Psoas muscle (tissue), 8 donors: ENCODE measurements at regions of chr2 and their contacts with region 1.

Region 1: DNA sequence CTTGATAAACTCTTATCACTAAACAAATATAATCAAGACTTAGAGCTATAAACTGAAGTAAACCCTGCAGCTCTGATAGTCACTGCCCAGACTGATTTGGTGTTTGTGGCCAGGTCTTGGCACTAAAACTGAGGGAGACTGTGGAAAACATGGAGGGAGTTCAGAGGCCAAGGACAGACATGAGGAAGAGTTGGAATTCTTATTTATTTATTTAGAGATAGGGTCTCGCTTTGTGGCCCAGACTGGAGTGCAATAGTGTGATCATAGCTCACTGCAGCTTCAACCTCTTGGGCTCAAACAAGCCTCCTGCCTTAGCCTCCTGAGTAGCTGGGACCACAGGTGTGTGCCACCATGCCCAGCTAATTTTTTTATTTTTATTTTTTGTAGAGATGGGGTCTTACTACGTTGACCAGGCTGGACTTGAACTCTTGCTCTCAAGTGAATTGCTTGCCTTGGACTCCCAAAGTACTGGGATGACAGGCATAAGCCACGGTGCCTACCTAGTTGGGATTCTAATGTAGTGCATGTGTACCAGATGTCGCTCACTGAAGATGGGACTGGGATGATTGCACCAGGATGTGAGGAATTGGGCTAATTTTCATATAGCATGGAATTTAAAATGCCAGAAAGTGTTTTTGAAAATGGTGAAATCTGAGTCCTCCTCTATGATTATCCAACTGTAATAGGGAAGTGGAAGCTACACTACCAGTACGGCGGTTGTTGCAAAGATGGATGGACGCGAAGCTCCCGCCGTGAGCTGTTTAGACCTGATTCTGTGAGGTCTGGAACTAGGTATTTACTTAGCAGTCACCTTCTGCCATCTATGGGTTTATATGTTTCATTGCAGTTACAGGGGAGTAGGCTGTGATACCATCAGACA is 52.7 kb upstream of the CTLA4 start:
- DNase-seq: peak; percentile 41 to 65
- ATAC-seq: peak; percentile 76 to 84 (median 79)
- H3K4me3 ChIP-seq: no peak overlapping the region
- H3K27ac ChIP-seq: peak overlapping the region; percentile 38
- H3K4me1 ChIP-seq: peaks cover 33% of the 10 kb centered on the region
- H3K27me3 ChIP-seq: no peaks in the 10 kb centered on the region
- CTCF ChIP-seq: peak; percentile 75

Region 2: GRCh38 chr2:203484266-203485112 is 330.4 kb before region 1 on chr2:
- intact Hi-C with region 1: loop called (anchors 2 to 10 kb)
- DNase-seq: no peak
- ATAC-seq: peak; percentile 84 to 97 (median 88)
- H3K4me3 ChIP-seq: no peak overlapping the region
- H3K27ac ChIP-seq: no peak overlapping the region
- H3K4me1 ChIP-seq: no peaks in the 10 kb centered on the region
- H3K27me3 ChIP-seq: no peaks in the 10 kb centered on the region
- CTCF ChIP-seq: peak; percentile 72

Region 3: GRCh38 chr2:203650860-203651613 is 163.9 kb before region 1 on chr2:
- intact Hi-C with region 1: loop called (anchors 5 to 10 kb)
- DNase-seq: no peak
- ATAC-seq: peak; percentile 86 to 91 (median 88)
- H3K4me3 ChIP-seq: no peak overlapping the region
- H3K27ac ChIP-seq: peak overlapping the region; percentile 1
- H3K4me1 ChIP-seq: peaks cover 27% of the 10 kb centered on the region
- H3K27me3 ChIP-seq: peaks cover 0 to 2% (median 0%) of the 10 kb centered on the region in 3 donors
- CTCF ChIP-seq: peak; percentile 43

Region 4: DNA sequence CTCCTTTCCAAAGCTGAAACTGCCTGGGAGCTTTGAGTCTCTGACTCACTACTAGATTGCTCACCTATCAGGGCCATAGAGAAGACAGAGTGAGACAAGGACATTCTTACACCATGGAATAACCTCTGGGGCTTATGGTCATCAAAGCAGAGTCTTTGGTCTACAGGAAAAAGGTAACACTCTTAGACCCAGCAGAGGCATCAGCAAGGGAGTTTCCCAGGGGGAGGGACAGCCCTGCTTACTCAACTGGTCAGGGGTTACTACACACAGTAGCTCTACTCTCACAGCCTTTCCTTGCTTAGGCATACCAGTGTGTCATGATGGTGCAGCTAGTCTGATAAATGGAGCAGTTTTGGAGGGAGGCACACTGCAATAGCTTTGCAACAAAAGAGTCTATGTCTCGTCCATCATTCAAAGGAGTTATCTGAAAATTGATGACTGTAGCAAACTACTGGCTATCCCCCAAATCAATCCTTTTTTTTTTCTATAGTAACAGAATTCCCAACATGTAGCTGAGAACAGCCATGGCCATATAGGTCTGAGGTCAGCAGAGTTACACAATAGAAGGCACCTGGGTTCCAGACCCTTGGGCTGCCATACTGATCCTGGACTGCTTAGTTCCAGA is 130.9 kb before region 1 on chr2:
- intact Hi-C with region 1: loop called in 1 of 2 experiments (anchors 5 kb)
- DNase-seq: peak in 1 of 2 donors; percentile 51
- ATAC-seq: peak; percentile 62 to 79 (median 66)
- H3K4me3 ChIP-seq: no peak overlapping the region
- H3K27ac ChIP-seq: peak overlapping the region; percentile 78
- H3K4me1 ChIP-seq: peaks cover 76% of the 10 kb centered on the region
- H3K27me3 ChIP-seq: no peaks in the 10 kb centered on the region
- CTCF ChIP-seq: no peak

Region 5: DNA sequence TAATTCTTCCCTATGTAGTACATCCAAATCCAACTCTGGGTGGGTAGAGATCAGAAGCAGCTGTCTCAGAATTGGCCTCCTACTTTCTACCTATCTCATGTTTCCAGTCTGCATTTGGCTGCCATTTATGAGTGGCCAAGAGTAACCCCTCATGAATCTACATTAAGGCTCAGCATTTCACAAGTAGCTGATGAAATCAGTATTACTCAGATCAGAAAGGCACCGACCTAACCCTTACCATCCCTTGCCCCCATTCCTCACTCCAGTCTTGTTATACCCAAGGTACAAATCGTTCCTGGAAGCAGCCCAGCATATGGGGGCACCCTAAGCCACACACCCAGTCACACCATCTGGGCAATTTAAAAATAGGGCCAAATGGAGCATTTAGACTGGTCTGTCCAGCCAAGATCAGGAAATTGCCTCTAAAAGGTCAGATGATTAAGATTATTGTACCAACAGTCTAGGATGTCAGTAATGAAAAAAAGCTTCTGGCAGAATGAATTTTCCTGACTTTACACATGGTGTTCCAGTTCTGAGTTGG is 71.4 kb before region 1 on chr2:
- intact Hi-C with region 1: no loop called
- DNase-seq: peak; percentile 58 to 74
- ATAC-seq: peak; percentile 91 to 96 (median 94)
- H3K4me3 ChIP-seq: no peak overlapping the region
- H3K27ac ChIP-seq: peak overlapping the region; percentile 74
- H3K4me1 ChIP-seq: peaks cover 13% of the 10 kb centered on the region
- H3K27me3 ChIP-seq: no peaks in the 10 kb centered on the region
- CTCF ChIP-seq: no peak

Region 6: DNA sequence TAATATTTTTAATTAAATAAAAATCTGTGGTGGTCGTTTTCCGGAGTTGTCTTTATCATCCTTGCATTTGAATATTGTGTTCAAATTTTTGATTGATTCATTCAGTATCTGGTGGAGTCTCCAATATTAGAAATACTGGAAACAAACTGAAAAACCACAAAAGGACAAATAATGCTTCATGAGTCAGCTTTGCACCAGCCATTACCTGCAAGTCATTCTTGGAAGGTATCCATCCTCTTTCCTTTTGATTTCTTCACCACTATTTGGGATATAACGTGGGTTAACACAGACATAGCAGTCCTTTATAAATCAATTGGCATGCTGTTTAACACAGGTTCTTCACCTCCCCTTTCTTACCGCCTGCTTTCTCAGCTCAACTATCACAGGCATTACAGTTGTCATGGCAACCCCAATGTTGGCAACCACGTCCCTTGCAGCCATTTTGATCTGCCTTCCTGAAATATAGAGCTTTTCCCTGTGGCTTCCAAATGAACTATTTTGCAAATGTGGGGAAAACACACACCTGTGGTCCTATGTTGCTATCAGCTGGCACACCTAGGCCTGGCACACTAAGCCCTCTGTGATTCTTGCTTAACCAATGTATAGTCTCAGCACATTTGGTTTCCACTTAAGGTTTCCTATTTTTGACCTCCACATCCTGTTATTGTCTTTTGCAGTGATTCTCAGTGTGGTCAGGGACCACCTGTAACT is 59.2 kb after region 1 on chr2:
- intact Hi-C with region 1: no loop called
- DNase-seq: no peak
- ATAC-seq: no peak
- H3K4me3 ChIP-seq: no peak overlapping the region
- H3K27ac ChIP-seq: no peak overlapping the region
- H3K4me1 ChIP-seq: peaks cover 3% of the 10 kb centered on the region
- H3K27me3 ChIP-seq: no peaks in the 10 kb centered on the region
- CTCF ChIP-seq: no peak

Region 7: GRCh38 chr2:203909261-203909967 is 94.5 kb after region 1 on chr2:
- intact Hi-C with region 1: loop called in 1 of 2 experiments (anchors 5 kb)
- DNase-seq: no peak
- ATAC-seq: peak; percentile 70 to 87 (median 76)
- H3K4me3 ChIP-seq: peak overlapping the region; percentile 45
- H3K27ac ChIP-seq: peak overlapping the region; percentile 27
- H3K4me1 ChIP-seq: peaks cover 11% of the 10 kb centered on the region
- H3K27me3 ChIP-seq: no peaks in the 10 kb centered on the region
- CTCF ChIP-seq: peak; percentile 85